BJ (cell line): ENCODE measurements at regions of chr12 and their contacts with region 1.

Region 1: GRCh38 chr12:116703214-116703795 is 34.6 kb downstream of the SPRING1 start:
- DNase-seq: no peak
- H3K4me3 ChIP-seq: no peak overlapping the region
- H3K27me3 ChIP-seq: no peaks in the 10 kb centered on the region; the same call in 1 of the 2 replicates
- CTCF ChIP-seq: peak; percentile 92

Region 2: GRCh38 chr12:116880817-116881324 is 177.6 kb after region 1 on chr12:
- CTCF ChIA-PET with region 1: interaction called, 55 read pairs
- POLR2A ChIA-PET with region 1: no interaction called
- DNase-seq: no peak
- H3K4me3 ChIP-seq: peak overlapping the region; percentile 4; the same call in 1 of the 2 replicates
- H3K27me3 ChIP-seq: peaks cover 49% of the 10 kb centered on the region
- CTCF ChIP-seq: no peak